ENCODE measurements at regions of chr5 and their contacts with region 1.

Region 1: GRCh38 chr5:77076961-77077823 is 9.9 kb downstream of the ZBED3 start:
- DNase-seq: peak; percentile 94
- H3K4me3 ChIP-seq: peak overlapping the region; percentile 52 to 53; a peak in 3 of 4 replicates
- H3K27ac ChIP-seq: no peak overlapping the region; a peak in 1 of 4 replicates
- H3K4me1 ChIP-seq: peaks cover 0 to 4% of the 10 kb centered on the region in 2 experiments; a peak in 2 of 4 replicates
- H3K27me3 ChIP-seq: no peaks in the 10 kb centered on the region
- CTCF ChIP-seq: peak; percentile 62
- EP300 ChIP-seq: no peak
- RAD21 ChIP-seq: peak; percentile 32; the same call in 1 of the 2 replicates

Region 2: DNA sequence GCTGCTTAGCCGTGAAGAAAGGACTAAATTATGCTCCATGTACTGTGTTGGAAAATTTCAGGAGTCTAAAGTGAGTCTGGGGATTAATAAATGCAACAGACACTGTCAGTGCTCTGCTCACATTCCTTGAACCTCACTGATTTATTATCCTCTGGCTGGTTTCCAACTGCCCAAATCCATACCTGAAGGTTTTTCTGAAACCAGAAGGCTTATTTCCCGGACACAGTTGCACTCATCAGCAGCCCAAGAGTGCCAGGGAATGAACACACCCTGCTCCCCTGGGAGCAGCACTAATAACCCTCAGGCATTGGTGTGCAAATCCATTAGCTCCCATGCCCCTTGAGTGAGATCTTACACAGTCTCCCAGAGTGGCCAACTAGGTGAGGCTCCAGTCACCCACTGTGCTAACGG is 322.5 kb before region 1 on chr5:
- CTCF ChIA-PET with region 1: no interaction called
- POLR2A ChIA-PET with region 1: no interaction called
- DNase-seq: no peak
- H3K4me3 ChIP-seq: no peak overlapping the region
- H3K27ac ChIP-seq: no peak overlapping the region
- H3K4me1 ChIP-seq: no peaks in the 10 kb centered on the region
- H3K27me3 ChIP-seq: no peaks in the 10 kb centered on the region
- CTCF ChIP-seq: no peak
- EP300 ChIP-seq: no peak
- RAD21 ChIP-seq: no peak

Region 3: GRCh38 chr5:76818844-76819831 is 258.1 kb before region 1 on chr5 and contains the start of gene F2RL1:
- CTCF ChIA-PET with region 1: no interaction called
- POLR2A ChIA-PET with region 1: no interaction called
- DNase-seq: peak; percentile 83
- H3K4me3 ChIP-seq: peak within 1 kb of the TSS; percentile 74 to 84
- H3K27ac ChIP-seq: peak within 1 kb of the TSS in 1 of 2 experiments; percentile 40; a peak in 1 of 4 replicates
- H3K4me1 ChIP-seq: peaks cover 8 to 17% of the 10 kb centered on the region in 2 experiments; a peak in 2 of 4 replicates
- H3K27me3 ChIP-seq: no peaks in the 10 kb centered on the region
- CTCF ChIP-seq: no peak
- EP300 ChIP-seq: no peak
- RAD21 ChIP-seq: no peak
- polyA plus RNA-seq, gene F2RL1: 31.3 and 41.3 TPM in 2 replicates

Region 4: DNA sequence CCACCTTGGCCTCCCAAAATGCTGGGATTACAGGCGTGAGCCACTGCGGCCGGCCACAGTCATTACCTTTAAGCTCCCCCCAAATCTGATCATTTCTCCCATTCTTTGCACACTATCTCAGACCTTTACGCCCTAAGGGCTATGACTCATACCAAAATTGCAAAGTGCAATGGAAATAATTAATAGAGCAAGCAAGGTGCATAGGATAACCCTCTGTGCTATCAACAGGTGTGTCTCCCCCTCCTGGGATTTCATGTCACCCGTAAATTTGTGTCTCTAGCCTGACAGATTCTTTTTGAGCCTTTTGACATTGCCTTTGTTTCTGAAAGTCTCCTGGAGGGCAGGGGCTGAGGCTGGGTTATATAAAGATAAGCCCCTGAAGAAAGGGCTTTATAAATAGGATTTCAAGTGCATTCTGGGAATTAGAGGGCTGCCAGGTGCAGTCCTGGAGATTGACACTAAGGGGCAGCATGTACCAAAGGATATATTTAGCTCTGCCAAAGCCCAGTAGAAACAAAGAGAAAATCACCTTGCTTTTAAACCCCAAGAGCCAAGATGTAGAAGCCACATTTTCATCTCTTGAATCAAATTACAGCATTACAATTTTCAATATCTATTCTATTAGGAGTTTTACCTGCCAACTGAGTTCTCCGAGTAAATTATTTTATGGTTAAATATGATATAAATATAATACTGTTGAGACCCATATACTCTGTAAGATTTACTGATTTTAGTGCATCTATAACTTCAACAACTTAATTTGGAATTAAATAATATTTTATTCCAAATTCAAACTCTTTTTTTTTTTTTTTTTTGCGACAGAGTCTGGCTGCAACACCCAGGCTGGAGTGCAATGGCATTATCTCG is 209.1 kb before region 1 on chr5:
- CTCF ChIA-PET with region 1: interaction called, 43 read pairs
- POLR2A ChIA-PET with region 1: no interaction called
- DNase-seq: peak; percentile 74
- H3K4me3 ChIP-seq: no peak overlapping the region
- H3K27ac ChIP-seq: no peak overlapping the region
- H3K4me1 ChIP-seq: no peaks in the 10 kb centered on the region
- H3K27me3 ChIP-seq: no peaks in the 10 kb centered on the region
- CTCF ChIP-seq: peak; percentile 91
- EP300 ChIP-seq: no peak
- RAD21 ChIP-seq: peak; percentile 95

Region 5: DNA sequence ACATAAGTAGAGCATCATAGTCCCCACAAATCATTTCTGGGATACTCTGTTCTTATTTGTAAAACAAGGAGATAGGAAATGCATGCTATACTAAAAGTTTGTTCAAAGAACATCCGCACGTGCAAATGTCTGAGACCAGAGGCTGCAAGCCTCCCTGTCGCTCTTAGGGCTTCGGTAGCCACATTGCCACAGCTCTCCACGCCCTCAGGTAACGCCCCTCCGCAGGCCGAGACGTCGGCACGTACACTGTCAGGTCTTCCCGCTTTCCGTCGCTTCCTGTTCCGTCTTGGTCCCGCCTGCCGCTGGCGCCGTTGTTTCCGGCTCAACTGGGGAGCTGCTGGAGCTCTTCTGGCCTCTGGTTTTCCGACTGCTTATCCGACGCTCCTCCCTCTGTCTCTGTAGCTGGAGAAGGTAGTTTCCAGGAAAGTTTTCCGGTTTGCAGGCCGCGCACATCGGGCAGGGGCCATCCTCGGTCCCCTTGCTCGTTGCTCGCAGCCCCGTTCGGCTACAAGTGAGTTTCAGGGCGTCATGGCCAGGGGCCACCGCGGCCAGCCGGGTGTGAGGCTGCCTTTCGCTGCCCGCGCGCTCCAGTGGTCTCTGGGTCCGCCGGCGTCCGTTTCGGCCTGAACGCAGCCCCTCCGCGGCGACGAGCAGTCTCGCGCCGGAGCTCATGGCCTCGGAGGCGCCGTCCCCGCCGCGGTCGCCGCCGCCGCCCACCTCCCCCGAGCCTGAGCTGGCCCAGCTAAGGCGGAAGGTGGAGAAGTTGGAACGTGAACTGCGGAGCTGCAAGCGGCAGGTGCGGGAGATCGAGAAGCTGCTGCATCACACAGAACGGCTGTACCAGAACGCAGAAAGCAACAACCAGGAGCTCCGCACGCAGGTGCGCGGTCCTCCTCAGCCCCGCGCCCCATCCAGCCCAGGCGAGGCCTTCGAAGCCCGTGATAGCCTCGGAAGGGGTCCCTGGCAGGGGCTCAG is 46.8 kb before region 1 on chr5 and contains the start of gene AGGF1:
- CTCF ChIA-PET with region 1: interaction called, 15 read pairs
- POLR2A ChIA-PET with region 1: interaction called, 9 read pairs
- DNase-seq: peak; percentile 90
- H3K4me3 ChIP-seq: peak within 1 kb of the TSS; percentile 82 to 99
- H3K27ac ChIP-seq: peak within 1 kb of the TSS; percentile 85 to 95
- H3K4me1 ChIP-seq: peaks cover 7 to 12% of the 10 kb centered on the region in 2 experiments; a peak in 3 of 4 replicates
- H3K27me3 ChIP-seq: no peaks in the 10 kb centered on the region; the same call in 1 of the 2 replicates
- CTCF ChIP-seq: no peak
- EP300 ChIP-seq: no peak
- RAD21 ChIP-seq: no peak
- polyA plus RNA-seq, gene AGGF1: 9.8 and 11.0 TPM in 2 replicates

Region 6: GRCh38 chr5:77066823-77067442 is 10.3 kb before region 1 on chr5:
- CTCF ChIA-PET with region 1: interaction called, 44 read pairs
- POLR2A ChIA-PET with region 1: no interaction called
- DNase-seq: no peak
- H3K4me3 ChIP-seq: no peak overlapping the region
- H3K27ac ChIP-seq: no peak overlapping the region
- H3K4me1 ChIP-seq: no peaks in the 10 kb centered on the region
- H3K27me3 ChIP-seq: no peaks in the 10 kb centered on the region
- CTCF ChIP-seq: no peak
- EP300 ChIP-seq: no peak
- RAD21 ChIP-seq: no peak